OCI-LY7 (cell line): ENCODE measurements at regions of chr6 and their contacts with region 1.

Region 1: DNA sequence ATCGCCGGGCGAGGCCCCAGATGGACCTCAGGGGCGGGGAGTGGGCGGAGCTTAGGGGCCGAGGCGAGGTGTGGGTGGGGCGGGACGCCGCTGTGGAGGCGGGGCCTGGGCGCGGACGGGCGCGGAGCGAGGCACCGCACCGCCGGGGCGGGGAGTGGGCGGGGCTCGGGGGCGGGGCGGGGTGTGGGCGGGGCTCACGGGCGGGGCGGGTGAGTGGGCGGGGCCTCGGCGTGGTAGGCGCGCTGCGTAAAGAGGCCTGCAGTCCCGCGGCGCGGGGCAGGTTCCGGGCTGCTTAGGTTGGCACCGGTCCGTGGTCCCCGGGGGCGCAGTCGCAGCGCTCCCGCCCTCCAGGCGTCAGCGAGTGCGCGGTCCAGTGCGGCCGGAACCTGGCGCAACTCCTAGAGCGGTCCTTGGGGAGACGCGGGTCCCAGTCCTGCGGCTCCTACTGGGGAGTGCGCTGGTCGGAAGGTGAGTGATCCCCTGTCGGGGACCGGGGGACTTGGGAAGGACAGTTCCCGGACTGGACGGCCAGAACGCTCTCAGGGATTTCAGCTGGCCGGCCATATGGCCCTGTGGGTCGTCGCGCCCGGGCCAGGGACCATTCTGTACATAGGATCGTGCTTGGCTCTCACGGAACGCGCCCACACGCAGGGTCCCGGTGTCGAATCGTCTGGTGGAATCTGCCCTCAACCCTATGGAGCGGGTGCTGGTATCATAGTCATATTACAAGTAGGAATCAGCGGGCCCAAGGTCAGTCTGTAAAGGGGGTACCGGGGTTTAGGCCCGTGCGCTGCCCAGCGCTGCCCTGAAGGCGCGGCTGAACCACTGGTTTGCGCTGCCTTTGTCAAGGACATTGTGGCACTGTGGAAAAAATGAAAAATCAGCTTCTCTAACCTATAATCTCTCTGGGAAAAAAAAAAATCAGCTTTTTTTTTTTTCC is at the start of gene NQO2:
- DNase-seq: peak; percentile 88
- H3K4me3 ChIP-seq: peak within 1 kb of the TSS; percentile 89
- H3K27ac ChIP-seq: peak within 1 kb of the TSS; percentile 29
- H3K4me1 ChIP-seq: peaks cover 18% of the 10 kb centered on the region
- CTCF ChIP-seq: no peak
- total RNA-seq, gene NQO2: 8.4 and 11.1 TPM in 2 replicates

Region 2: DNA sequence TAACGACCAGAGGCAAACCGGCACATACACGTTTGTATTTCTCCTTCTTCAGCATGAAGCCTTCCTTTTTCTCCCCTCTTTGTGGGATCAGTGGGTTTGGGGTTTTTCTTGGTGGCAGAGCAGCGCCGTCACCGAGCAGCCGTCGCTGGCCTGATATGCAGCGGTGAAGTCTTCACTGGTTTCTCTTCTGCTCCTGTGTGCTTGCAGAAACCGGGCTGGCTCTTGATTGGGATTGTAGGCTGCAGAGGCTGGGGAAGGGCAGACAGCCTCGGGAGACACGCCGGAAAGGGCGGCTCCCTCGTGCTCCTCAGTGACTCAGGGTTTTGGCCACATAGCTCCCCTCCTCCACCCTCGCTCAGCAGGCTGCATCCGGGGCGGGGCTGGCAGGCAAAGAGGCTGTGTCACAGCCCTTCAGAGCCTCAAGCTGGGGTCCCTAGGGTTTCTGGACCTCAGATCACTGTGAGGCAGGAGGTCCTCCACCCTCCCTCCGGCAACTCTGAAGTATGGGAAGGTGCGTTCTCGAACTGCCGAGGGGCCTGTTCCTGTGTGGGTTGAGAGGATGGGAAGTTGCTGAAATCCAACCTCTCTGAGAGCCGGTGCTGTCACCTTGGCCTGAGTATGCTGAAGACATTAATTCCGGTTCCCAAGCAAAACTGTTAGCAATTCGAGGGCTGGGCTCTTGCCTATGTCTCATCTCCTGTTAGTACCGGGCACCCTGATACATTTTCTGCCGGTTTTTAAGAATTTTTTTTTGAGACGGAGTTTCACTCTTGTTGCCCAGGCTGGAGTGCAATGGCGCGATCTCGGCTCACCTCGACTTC is 24.0 kb after region 1 on chr6:
- CTCF ChIA-PET with region 1: interaction called, 4 read pairs
- POLR2A ChIA-PET with region 1: interaction called, 29 read pairs
- intact Hi-C with region 1: loop called (anchors 1 kb)
- DNase-seq: peak; percentile 88
- H3K4me3 ChIP-seq: peak overlapping the region; percentile 61
- H3K27ac ChIP-seq: peak overlapping the region; percentile 95
- H3K4me1 ChIP-seq: peaks cover 62% of the 10 kb centered on the region
- CTCF ChIP-seq: no peak

Region 3: DNA sequence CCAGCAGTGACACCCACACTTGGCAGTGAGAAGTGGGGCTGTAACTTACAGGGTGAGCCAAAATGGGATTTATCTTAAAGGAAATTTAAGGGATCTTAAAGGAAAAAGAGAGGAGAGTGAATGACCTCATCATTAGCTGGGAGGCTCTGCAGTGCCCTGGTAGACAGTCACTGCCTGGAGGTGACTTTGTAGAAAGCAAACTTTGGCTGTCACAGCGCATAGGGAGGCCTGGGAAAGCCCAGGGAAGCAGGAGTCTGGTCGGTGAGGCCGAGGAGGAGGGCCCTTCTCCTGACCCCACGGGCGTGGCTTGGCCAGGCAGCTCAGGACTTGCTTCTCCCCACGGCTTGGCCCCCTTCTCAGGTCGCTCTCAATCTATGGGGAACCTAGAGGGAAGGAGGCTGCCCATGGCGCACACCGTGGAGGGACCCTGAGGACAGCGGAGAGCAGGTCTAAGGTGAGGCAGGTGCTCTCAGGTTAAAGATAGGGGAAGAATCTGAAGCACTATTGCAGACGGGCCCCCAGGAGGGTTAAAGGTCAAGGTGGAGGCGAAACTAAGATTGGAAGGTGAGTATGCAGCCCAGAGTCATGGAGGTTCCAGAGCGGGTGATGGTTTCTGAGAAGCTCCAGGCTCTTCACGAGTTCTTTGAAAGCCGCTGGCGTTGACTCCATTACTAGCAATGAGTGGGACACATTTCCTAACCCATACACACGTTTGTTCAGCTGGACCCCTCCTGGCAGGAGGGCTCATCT is 52.8 kb after region 1 on chr6:
- CTCF ChIA-PET with region 1: interaction called, 8 read pairs
- POLR2A ChIA-PET with region 1: interaction called, 5 read pairs
- intact Hi-C with region 1: loop called (anchors 1 kb)
- DNase-seq: no peak
- H3K4me3 ChIP-seq: peak overlapping the region; percentile 68
- H3K27ac ChIP-seq: no peak overlapping the region
- H3K4me1 ChIP-seq: peaks cover 22% of the 10 kb centered on the region
- CTCF ChIP-seq: no peak

Region 4: DNA sequence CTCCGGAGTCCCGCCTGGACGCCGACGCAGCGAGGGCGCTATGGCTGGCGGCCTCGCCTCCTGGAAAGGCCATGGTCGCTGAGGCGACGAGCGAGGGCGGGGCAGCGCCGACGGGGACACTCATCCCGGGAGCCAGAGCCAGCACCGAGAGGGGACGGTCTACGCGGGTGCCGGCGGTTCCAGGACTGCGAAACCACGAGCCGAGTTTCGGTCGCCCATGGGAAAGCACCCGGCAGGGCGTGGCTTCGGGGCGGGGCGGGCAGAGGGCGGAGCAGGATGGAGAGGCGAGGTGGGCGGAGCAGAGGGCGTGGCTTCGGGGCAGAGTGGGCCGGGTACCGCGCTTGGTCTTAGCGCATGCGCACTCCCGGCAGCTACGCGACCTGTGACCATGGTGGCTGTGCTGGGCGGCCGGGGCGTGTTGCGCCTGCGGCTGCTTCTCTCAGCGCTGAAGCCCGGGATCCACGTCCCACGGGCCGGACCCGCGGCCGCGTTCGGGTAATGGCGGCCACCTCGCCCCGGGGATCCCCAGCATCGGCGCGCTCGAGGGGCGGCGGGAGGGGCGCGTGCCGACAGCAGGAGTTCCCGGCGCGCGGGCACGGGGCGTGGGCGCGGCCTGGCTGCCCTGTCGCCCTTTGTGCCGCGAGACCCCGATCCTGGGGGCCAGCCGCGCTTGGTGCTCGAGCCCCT is 118.6 kb after region 1 on chr6 and contains the start of gene BPHL:
- CTCF ChIA-PET with region 1: no interaction called
- POLR2A ChIA-PET with region 1: no interaction called
- intact Hi-C with region 1: loop called (anchors 2 kb)
- DNase-seq: peak; percentile 95
- H3K4me3 ChIP-seq: peak within 1 kb of the TSS; percentile 81
- H3K27ac ChIP-seq: peak within 1 kb of the TSS; percentile 22
- H3K4me1 ChIP-seq: peaks cover 18% of the 10 kb centered on the region
- CTCF ChIP-seq: 0 out of 2 replicates have a peak, but pooled peaks have one; percentile 14
- total RNA-seq, gene BPHL: 9.7 and 12.3 TPM in 2 replicates

Region 5: DNA sequence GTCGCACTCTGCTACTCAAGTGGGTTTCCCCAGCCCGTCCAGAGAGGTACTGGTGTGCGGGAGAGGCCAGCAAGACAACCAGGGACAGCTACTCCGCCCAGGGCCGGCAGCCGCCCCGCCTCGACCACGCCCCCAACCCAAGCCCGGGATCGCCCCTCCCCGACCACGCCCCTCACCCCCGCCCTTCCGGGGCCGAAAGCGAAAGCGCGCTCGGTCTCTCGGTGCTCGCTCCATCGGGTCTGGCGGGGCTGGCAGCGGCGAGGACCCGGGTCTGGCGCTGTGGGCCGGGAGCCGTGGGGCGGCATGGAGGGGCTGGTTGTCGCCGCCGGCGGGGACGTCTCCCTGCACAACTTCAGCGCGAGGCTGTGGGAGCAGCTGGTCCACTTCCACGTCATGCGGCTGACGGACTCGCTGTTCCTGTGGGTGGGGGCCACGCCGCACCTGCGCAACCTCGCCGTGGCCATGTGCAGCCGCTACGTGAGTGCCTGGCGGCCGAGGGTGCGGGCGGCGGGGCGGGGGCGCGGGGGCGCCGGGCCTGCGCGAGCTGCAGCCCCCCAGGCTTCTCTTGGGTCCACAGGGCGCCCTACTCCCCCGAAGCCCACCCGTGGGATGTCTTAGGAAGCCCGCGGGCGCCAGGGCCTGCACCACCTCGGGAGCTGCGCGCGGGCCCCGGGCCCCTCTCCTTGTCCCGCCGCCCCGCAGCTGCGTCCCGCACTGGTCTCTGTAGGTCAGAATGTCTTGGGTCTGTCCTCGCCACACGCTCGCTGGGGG is 259.0 kb after region 1 on chr6 and contains the start of gene PSMG4:
- CTCF ChIA-PET with region 1: no interaction called
- POLR2A ChIA-PET with region 1: no interaction called
- intact Hi-C with region 1: loop called (anchors 5 kb)
- DNase-seq: peak; percentile 90
- H3K4me3 ChIP-seq: peak within 1 kb of the TSS; percentile 95
- H3K27ac ChIP-seq: peak within 1 kb of the TSS; percentile 49
- H3K4me1 ChIP-seq: peaks cover 15% of the 10 kb centered on the region
- CTCF ChIP-seq: no peak
- total RNA-seq, gene PSMG4: 58.3 and 65.4 TPM in 2 replicates